Activated CD8-positive, alpha-beta memory T cell treated with anti-CD3 and anti-CD28 coated beads, Interleukin-2, amount 10 ng/mL, durations not matched to agents 7 days and 5 days (primary cell): ENCODE measurements at regions of chr2 and their contacts with region 1.

Region 1: DNA sequence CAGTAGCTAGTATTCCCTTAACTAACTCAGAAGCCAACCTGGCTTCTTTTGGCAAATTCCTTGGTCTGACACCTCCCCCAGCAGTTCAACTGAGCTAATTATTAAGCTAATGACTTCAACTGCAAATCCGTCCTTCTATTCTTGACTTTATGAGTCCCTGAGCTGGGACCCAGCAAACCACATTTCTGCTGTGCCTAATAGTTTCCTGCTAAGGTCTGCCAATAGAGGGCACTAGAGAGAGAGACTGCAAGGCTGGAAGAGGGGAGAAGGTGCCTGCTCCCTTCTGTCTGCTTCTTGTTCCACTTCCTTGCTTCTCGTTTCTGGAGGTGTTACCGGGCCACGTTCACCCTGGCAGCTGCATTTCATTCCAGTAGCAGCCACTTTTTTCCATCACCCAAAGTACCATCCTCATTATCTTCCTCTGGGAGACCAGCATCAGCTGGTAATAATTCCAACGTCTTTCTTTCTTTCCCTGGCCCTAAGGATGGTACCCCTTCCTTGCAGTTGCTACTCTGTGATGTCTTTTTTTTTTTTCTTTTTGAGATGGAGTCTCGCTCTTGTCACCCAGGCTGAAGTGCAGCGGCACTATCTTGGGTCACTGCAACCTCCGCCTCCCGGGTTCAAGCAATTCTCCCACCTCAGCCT is 352.0 kb downstream of the TNS1 start:
- DNase-seq: peak; percentile 45
- ATAC-seq: no peak
- H3K4me3 Mint-ChIP-seq: no peak overlapping the region
- H3K27ac Mint-ChIP-seq: no peak overlapping the region
- H3K4me1 Mint-ChIP-seq: no peaks in the 10 kb centered on the region
- H3K27me3 Mint-ChIP-seq: no peaks in the 10 kb centered on the region

Region 2: GRCh38 chr2:217673627-217674192 is 22.9 kb after region 1 on chr2:
- CTCF ChIA-PET with region 1: no interaction called
- DNase-seq: no peak
- ATAC-seq: no peak
- H3K4me3 Mint-ChIP-seq: no peak overlapping the region
- H3K27ac Mint-ChIP-seq: no peak overlapping the region
- H3K4me1 Mint-ChIP-seq: no peaks in the 10 kb centered on the region
- H3K27me3 Mint-ChIP-seq: no peaks in the 10 kb centered on the region

Region 3: DNA sequence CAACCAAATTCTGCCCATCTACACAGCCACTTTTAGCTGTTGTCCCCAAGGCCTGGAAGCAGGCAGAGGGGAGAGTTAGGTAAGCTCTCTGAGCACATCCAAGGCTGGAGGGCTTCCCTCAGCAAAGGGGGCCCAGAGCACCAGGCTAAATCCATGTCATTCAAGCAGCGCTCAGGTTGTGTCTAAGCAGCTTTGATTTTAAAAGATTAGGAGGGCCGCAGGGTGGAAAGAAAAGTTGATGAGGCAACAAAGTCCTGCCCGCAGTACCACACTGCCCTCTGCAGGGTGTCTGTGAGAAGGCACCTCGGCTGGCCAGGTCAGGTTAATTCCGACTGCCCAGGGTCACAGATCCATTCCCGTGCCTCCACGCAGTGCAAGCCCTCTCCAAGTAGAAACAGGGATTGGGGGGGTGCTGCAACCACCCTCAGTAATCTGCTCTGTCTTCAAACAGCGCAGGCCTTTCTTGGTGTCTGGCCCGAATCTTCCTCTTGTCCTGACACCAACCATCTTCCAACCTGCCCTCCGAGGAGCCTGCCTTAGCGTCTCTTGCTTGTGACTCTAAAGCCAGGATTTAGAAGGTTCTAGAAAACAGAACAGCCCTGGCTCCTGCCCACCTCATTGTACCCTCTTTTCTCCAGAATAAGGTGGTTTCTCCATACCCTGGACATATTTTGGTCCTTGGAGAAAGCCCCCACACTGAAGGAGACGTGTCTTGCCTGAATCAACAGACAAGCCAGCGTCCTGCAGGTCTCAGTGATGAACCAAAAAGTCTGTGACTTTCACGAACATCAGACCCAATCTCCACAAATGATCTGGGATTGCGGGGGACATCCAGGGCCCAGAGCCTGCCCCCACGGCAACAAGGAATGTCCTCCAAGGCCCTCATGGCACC is 62.8 kb after region 1 on chr2:
- CTCF ChIA-PET with region 1: interaction called, 14 read pairs
- DNase-seq: peak; percentile 78
- ATAC-seq: peak; percentile 84
- H3K4me3 Mint-ChIP-seq: no peak overlapping the region
- H3K27ac Mint-ChIP-seq: no peak overlapping the region
- H3K4me1 Mint-ChIP-seq: no peaks in the 10 kb centered on the region
- H3K27me3 Mint-ChIP-seq: no peaks in the 10 kb centered on the region

Region 4: GRCh38 chr2:218033590-218034496 is 383.0 kb after region 1 on chr2:
- CTCF ChIA-PET with region 1: no interaction called
- DNase-seq: peak; percentile 40
- ATAC-seq: peak; percentile 3
- H3K4me3 Mint-ChIP-seq: peak overlapping the region; percentile 18
- H3K27ac Mint-ChIP-seq: no peak overlapping the region
- H3K4me1 Mint-ChIP-seq: peaks cover 19% of the 10 kb centered on the region
- H3K27me3 Mint-ChIP-seq: no peaks in the 10 kb centered on the region